ENCODE measurements at regions of chr9 and their contacts with region 1.

Region 1: DNA sequence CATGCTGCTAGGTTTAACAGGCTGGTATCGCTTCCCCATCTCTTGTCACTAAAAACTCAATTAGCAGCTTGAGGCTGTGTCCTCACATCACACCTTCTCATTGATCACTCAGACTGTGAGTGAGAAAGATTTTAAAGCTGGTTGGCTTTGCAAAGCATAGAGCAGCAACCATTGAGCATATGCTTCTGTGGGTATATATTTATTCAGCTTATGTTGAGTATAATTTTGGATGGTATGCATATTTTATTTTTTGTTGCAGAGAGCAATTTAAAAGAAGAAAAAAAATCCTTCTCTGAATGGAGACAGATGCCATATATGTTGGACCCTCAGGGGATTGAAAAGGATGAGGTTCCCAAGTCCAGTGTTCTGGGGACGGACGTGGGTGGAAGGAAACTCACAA is 162.6 kb downstream of the TRIM32 start:
- DNase-seq: no peak
- ATAC-seq: no peak
- H3K4me3 ChIP-seq: no peak overlapping the region
- H3K27ac ChIP-seq: no peak overlapping the region
- H3K4me1 ChIP-seq: no peaks in the 10 kb centered on the region
- CTCF ChIP-seq: no peak
- EP300 ChIP-seq: no peak
- POLR2A ChIP-seq: no peak
- RAD21 ChIP-seq: no peak

Region 2: DNA sequence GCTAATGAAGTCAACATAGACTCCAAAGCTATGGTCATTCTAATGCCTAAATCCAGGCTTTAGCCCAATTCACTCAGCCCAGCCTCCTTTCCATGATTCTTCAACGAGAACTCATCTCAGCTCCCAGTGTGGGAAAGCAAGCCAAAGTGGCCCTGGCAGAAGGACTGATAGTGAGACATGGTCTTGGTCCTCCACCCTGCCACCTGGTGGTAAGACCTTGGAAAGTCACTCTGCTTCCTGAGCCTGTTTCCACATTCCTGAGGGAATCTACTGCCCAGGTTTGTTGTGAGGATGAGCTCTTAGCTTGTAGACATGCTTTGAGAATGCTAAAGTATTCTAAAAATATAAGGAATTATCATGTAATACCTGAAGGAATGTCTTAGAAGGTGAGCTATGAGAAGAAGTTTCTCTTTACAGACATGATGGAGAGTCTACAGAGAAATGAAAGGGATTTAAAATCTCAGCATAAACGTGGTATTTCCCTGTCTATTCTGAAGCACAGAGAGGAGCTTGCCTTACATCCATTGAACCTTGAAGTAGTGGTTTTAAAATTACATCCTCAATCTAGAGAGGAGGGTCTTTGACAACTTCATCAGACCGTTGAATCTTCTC is 10.9 kb after region 1 on chr9:
- CTCF ChIA-PET with region 1: interaction called, 28 read pairs
- POLR2A ChIA-PET with region 1: no interaction called
- DNase-seq: peak; percentile 62 to 76
- ATAC-seq: peak; percentile 92 to 97
- H3K4me3 ChIP-seq: no peak overlapping the region
- H3K27ac ChIP-seq: no peak overlapping the region
- H3K4me1 ChIP-seq: no peaks in the 10 kb centered on the region
- CTCF ChIP-seq: peak; percentile 67
- EP300 ChIP-seq: no peak
- POLR2A ChIP-seq: no peak
- RAD21 ChIP-seq: peak; percentile 52 to 57

Region 3: DNA sequence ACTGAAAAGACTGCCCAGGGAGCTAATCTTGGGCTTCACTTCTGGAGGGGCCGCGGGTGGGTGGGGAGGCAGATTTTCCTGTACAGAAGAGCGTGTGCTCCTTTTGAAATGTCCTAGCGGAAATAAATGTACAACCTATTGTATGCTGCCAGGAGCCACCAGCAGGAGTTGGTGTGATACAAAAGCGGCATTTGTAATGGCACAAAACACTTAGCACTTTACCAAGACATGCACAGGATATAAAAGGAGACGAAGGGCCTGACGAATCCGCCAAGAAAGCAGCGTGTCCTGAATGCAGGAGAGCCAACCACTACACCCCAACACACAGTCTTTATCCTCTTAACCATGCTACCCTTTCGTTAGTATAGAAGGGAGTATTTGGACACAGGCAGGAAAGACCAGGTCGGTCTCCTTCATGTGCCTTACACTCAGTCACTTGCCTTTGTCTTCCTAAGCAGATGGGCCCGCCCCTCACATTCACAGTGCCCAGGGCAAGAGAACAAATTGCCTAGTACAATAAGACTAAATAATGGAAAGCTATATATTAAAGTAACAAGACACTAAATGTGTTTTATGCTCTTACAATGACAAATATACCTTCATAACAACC is 55.5 kb after region 1 on chr9:
- CTCF ChIA-PET with region 1: no interaction called
- POLR2A ChIA-PET with region 1: no interaction called
- DNase-seq: no peak
- ATAC-seq: no peak
- H3K4me3 ChIP-seq: no peak overlapping the region
- H3K27ac ChIP-seq: no peak overlapping the region
- H3K4me1 ChIP-seq: no peaks in the 10 kb centered on the region
- CTCF ChIP-seq: no peak
- EP300 ChIP-seq: no peak
- POLR2A ChIP-seq: no peak
- RAD21 ChIP-seq: no peak